Caco-2 (cell line): ENCODE measurements at regions of chr11 and their contacts with region 1.

Region 1: GRCh38 chr11:31107062-31107461 is 262.5 kb downstream of the DCDC1 start:
- DNase-seq: peak; percentile 58 to 75
- H3K4me3 ChIP-seq: no peak overlapping the region
- H3K4me3 Mint-ChIP-seq: no peak overlapping the region
- H3K27ac Mint-ChIP-seq: no peak overlapping the region
- H3K4me1 ChIP-seq: no peaks in the 10 kb centered on the region
- H3K4me1 Mint-ChIP-seq: peaks cover 8% of the 10 kb centered on the region
- H3K27me3 ChIP-seq: no peaks in the 10 kb centered on the region
- H3K27me3 Mint-ChIP-seq: peaks cover 7% of the 10 kb centered on the region
- CTCF ChIP-seq: peak; percentile 81 to 84

Region 2: DNA sequence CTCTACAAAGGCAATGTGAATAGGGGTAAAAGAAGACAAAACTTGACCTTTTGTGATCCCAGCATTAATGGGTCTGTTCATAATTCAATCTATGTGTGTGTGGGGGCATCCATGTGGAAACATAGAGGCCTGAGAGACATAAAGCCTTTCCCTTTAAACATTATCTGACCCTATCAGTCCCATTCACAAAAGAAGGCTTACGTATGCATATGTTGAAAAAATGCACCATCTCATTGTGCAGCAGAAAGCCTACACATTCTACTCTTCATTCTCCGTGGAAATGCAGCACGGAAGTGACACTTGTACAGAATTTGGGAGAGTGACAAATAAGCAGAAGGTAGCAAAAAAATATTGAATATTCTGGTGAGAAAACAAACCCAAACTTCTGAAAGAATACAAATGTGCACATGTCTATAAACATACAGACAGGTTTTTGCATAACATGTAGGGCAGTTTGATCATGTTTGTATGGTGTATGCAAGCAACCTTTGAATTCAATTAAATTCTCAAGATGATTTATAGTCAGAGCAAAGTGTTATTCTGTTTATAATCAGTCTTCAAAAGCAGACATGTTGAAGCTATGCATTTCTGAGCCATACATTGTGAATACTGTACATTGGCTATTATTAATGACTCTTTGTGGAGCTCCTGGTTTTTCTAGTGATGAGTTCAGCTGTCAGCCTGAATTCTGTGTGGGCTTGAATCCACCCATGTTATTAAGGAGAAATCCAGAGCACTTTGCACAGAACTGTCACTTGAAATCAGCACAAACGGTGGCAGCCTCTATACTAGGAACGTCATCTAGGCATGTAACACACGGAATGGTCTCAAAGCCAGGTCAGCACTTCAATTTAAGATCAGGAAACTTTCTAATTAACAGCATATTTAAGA is 25.7 kb after region 1 on chr11:
- CTCF ChIA-PET with region 1: no interaction called
- POLR2A ChIA-PET with region 1: no interaction called
- intact Hi-C with region 1: no loop called
- DNase-seq: no peak
- H3K4me3 ChIP-seq: no peak overlapping the region
- H3K4me3 Mint-ChIP-seq: no peak overlapping the region
- H3K27ac Mint-ChIP-seq: no peak overlapping the region
- H3K4me1 ChIP-seq: no peaks in the 10 kb centered on the region
- H3K4me1 Mint-ChIP-seq: no peaks in the 10 kb centered on the region
- H3K27me3 ChIP-seq: no peaks in the 10 kb centered on the region
- H3K27me3 Mint-ChIP-seq: peaks cover 6% of the 10 kb centered on the region
- CTCF ChIP-seq: no peak

Region 3: GRCh38 chr11:31233424-31233823 is 126.4 kb after region 1 on chr11:
- CTCF ChIA-PET with region 1: interaction called, 25 read pairs
- POLR2A ChIA-PET with region 1: no interaction called
- intact Hi-C with region 1: loop called (anchors 1 kb)
- DNase-seq: peak in 1 of 2 experiments; percentile 9
- H3K4me3 ChIP-seq: no peak overlapping the region
- H3K4me3 Mint-ChIP-seq: no peak overlapping the region
- H3K27ac Mint-ChIP-seq: no peak overlapping the region
- H3K4me1 ChIP-seq: no peaks in the 10 kb centered on the region
- H3K4me1 Mint-ChIP-seq: no peaks in the 10 kb centered on the region
- H3K27me3 ChIP-seq: no peaks in the 10 kb centered on the region
- H3K27me3 Mint-ChIP-seq: no peaks in the 10 kb centered on the region
- CTCF ChIP-seq: peak; percentile 44 to 48

Region 4: GRCh38 chr11:31355131-31355530 is 248.1 kb after region 1 on chr11:
- CTCF ChIA-PET with region 1: no interaction called
- POLR2A ChIA-PET with region 1: no interaction called
- intact Hi-C with region 1: no loop called
- DNase-seq: no peak
- H3K4me3 ChIP-seq: no peak overlapping the region
- H3K4me3 Mint-ChIP-seq: no peak overlapping the region
- H3K27ac Mint-ChIP-seq: no peak overlapping the region
- H3K4me1 ChIP-seq: no peaks in the 10 kb centered on the region
- H3K4me1 Mint-ChIP-seq: no peaks in the 10 kb centered on the region
- H3K27me3 ChIP-seq: no peaks in the 10 kb centered on the region
- H3K27me3 Mint-ChIP-seq: peaks cover 4% of the 10 kb centered on the region
- CTCF ChIP-seq: no peak

Region 5: DNA sequence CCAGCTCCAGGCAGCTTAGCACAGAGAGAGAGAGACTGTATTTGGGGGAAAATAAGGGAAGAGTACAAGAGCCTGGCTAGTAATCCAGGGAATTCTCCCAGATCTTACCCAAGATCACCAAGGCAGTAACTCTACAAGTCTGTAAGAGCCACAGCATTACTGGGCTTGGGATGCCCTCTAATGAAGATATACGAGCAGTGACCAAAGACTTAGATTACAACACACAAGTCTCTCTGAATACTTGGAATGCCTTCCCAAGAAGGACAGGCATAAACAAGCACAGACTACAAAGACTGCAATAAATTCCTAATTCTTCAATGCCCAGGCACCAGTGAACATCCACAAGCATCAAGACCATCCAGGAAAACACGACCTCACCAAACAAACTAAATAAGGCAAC is 280.3 kb after region 1 on chr11:
- CTCF ChIA-PET with region 1: no interaction called
- POLR2A ChIA-PET with region 1: no interaction called
- intact Hi-C with region 1: loop called (anchors 1 kb)
- DNase-seq: peak; percentile 41 to 60
- H3K4me3 ChIP-seq: no peak overlapping the region
- H3K4me3 Mint-ChIP-seq: no peak overlapping the region
- H3K27ac Mint-ChIP-seq: peak overlapping the region; percentile 63
- H3K4me1 ChIP-seq: peaks cover 11% of the 10 kb centered on the region
- H3K4me1 Mint-ChIP-seq: peaks cover 21% of the 10 kb centered on the region
- H3K27me3 ChIP-seq: no peaks in the 10 kb centered on the region
- H3K27me3 Mint-ChIP-seq: no peaks in the 10 kb centered on the region
- CTCF ChIP-seq: no peak

Region 6: GRCh38 chr11:31870609-31871309 is 763.7 kb after region 1 on chr11:
- CTCF ChIA-PET with region 1: interaction called, 5 read pairs
- POLR2A ChIA-PET with region 1: no interaction called
- intact Hi-C with region 1: loop called (anchors 1 kb)
- DNase-seq: peak; percentile 71 to 75
- H3K4me3 ChIP-seq: no peak overlapping the region
- H3K4me3 Mint-ChIP-seq: no peak overlapping the region
- H3K27ac Mint-ChIP-seq: no peak overlapping the region
- H3K4me1 ChIP-seq: no peaks in the 10 kb centered on the region
- H3K4me1 Mint-ChIP-seq: no peaks in the 10 kb centered on the region
- H3K27me3 ChIP-seq: no peaks in the 10 kb centered on the region
- H3K27me3 Mint-ChIP-seq: peaks cover 17% of the 10 kb centered on the region
- CTCF ChIP-seq: peak; percentile 58 to 90

Region 7: GRCh38 chr11:32176223-32176934 is 1069.3 kb after region 1 on chr11:
- CTCF ChIA-PET with region 1: interaction called, 6 read pairs
- POLR2A ChIA-PET with region 1: no interaction called
- intact Hi-C with region 1: loop called (anchors 2 kb)
- DNase-seq: peak; percentile 81 to 88
- H3K4me3 ChIP-seq: no peak overlapping the region
- H3K4me3 Mint-ChIP-seq: no peak overlapping the region
- H3K27ac Mint-ChIP-seq: no peak overlapping the region
- H3K4me1 ChIP-seq: no peaks in the 10 kb centered on the region
- H3K4me1 Mint-ChIP-seq: no peaks in the 10 kb centered on the region
- H3K27me3 ChIP-seq: no peaks in the 10 kb centered on the region
- H3K27me3 Mint-ChIP-seq: peaks cover 20% of the 10 kb centered on the region
- CTCF ChIP-seq: peak; percentile 87